K562 (cell line): ENCODE measurements at regions of chrX and their contacts with region 1.

Region 1: DNA sequence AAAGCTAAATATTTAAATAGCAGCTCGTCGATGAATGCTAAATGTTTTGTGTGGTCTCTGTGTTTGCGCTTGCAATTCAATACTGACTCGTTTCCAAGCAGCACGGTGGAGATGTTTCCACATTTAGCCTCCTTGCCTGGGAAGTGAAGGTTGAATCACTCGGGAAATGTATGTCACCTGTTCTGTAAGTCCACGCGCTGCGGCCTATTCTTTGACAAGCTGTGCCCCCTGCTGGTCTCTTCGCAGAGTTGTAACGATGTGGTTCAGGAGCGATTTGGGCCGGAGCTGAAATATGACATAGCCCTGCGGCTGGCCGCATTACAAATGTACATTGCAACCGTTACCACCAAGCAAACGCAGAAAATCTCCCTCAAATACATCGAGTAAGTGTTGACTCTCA is 89.6 kb upstream of the PRPS2 start:
- DNase-seq: peak; percentile 58 to 78 (median 63)
- ATAC-seq: peak; percentile 100
- H3K4me3 ChIP-seq: no peak overlapping the region
- H3K27ac ChIP-seq: no peak overlapping the region
- H3K4me1 ChIP-seq: no peaks in the 10 kb centered on the region
- H3K27me3 ChIP-seq: no peaks in the 10 kb centered on the region; a peak in 1 of 5 replicates
- CTCF ChIP-seq: peak; percentile 71 to 76 (median 76)
- EP300 ChIP-seq: no peak
- POLR2A ChIP-seq: no peak
- RAD21 ChIP-seq: peak; percentile 61 to 78

Region 2: GRCh38 chrX:11787564-11787963 is 914.1 kb before region 1 on chrX:
- CTCF ChIA-PET with region 1: interaction called, 4 read pairs
- POLR2A ChIA-PET with region 1: no interaction called
- in situ Hi-C with region 1: no loop called
- intact Hi-C with region 1: loop called (anchors 5 kb)
- DNase-seq: peak; percentile 34 to 67 (median 42)
- ATAC-seq: peak; percentile 91
- H3K4me3 ChIP-seq: no peak overlapping the region
- H3K27ac ChIP-seq: no peak overlapping the region
- H3K4me1 ChIP-seq: peaks cover 0 to 4% of the 10 kb centered on the region in 2 experiments; a peak in 1 of 5 replicates
- H3K27me3 ChIP-seq: no peaks in the 10 kb centered on the region
- CTCF ChIP-seq: peak; percentile 61 to 67 (median 62)
- EP300 ChIP-seq: no peak
- POLR2A ChIP-seq: no peak
- RAD21 ChIP-seq: peak; percentile 11 to 41; a peak in 1 of 4 replicates

Region 3: GRCh38 chrX:12080265-12080664 is 621.4 kb before region 1 on chrX:
- CTCF ChIA-PET with region 1: interaction called, 3 read pairs
- POLR2A ChIA-PET with region 1: no interaction called
- in situ Hi-C with region 1: no loop called
- intact Hi-C with region 1: loop called (anchors 1 kb)
- DNase-seq: peak; percentile 8 to 24 (median 10)
- ATAC-seq: no peak
- H3K4me3 ChIP-seq: no peak overlapping the region
- H3K27ac ChIP-seq: no peak overlapping the region
- H3K4me1 ChIP-seq: no peaks in the 10 kb centered on the region
- H3K27me3 ChIP-seq: no peaks in the 10 kb centered on the region
- CTCF ChIP-seq: peak; percentile 18 to 44 (median 23); a peak in 3 of 6 replicates
- EP300 ChIP-seq: no peak
- POLR2A ChIP-seq: no peak
- RAD21 ChIP-seq: peak; percentile 21 to 50; a peak in 2 of 4 replicates

Region 4: DNA sequence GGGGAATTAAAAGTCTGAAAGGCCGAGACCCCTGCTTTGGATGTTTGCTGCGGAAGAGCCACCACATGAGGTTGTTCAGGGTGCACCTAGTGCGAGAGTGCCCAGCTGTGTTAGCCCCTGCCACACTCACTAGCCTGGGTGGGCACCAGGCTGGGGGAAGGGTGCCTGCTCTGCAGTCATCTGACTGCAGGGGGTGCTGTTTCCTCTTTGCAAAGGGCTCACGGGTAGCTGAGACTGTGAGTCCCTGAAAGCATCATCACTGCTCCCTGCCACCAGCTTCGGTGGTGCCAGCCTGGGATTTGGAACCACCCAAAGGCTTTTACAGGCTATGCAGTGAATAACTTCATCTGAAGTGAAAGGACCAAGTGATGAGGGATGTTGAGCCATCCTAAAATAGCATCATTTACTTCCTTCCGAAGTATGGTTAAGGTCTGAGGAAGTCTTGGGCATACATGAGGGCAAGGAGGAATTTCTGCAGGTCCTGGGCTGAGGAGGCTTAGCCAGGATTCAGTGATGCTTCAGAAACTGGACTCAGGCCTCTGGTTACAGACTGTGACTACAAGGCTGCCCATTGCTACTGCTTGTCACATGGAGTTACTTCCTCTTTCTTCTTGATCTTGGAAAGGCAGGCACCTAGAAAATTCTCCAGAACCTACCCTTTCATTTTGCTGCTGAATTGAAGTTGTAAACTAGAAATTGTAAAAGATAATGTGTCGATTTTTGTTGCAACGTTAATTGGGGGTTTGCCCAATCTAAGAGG is 203.6 kb before region 1 on chrX:
- CTCF ChIA-PET with region 1: interaction called, 3 read pairs
- POLR2A ChIA-PET with region 1: no interaction called
- in situ Hi-C with region 1: no loop called
- intact Hi-C with region 1: loop called (anchors 2 kb)
- DNase-seq: peak; percentile 8 to 21 (median 14)
- ATAC-seq: peak; percentile 64; the same call in 2 of the 3 replicates
- H3K4me3 ChIP-seq: no peak overlapping the region
- H3K27ac ChIP-seq: no peak overlapping the region
- H3K4me1 ChIP-seq: no peaks in the 10 kb centered on the region
- H3K27me3 ChIP-seq: no peaks in the 10 kb centered on the region
- CTCF ChIP-seq: peak; percentile 32 to 54 (median 38)
- EP300 ChIP-seq: no peak
- POLR2A ChIP-seq: no peak
- RAD21 ChIP-seq: peak in 1 of 2 experiments; percentile 35; a peak in 2 of 4 replicates

Region 5: DNA sequence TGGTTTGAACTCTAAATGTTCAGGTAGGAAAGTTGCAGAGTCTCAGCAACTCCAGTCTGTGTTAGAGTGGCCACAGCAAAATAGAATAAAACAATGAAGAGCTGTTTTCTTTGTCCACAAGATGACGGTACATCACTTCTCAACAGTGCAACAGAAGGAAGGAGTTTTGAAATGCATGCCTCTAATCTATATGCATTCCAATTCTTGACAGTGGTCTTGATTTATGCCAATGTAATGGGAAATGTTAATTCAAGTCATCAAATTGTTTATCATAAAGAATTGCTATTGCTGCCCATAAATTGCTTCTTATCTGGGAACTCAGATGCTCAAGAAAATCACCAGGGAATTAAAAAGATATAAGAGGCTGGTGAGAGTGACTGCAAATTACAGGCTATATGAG is 105.9 kb before region 1 on chrX:
- CTCF ChIA-PET with region 1: no interaction called
- POLR2A ChIA-PET with region 1: no interaction called
- in situ Hi-C with region 1: no loop called
- intact Hi-C with region 1: loop called (anchors 10 kb)
- DNase-seq: no peak
- ATAC-seq: no peak
- H3K4me3 ChIP-seq: no peak overlapping the region
- H3K27ac ChIP-seq: no peak overlapping the region
- H3K4me1 ChIP-seq: no peaks in the 10 kb centered on the region
- H3K27me3 ChIP-seq: no peaks in the 10 kb centered on the region
- CTCF ChIP-seq: no peak
- EP300 ChIP-seq: no peak
- POLR2A ChIP-seq: no peak
- RAD21 ChIP-seq: 0 out of 4 replicates have a peak, but pooled peaks of 1 of the 2 experiments have one; percentile 10

Region 6: GRCh38 chrX:12771445-12772069 is 69.9 kb after region 1 on chrX:
- CTCF ChIA-PET with region 1: no interaction called
- POLR2A ChIA-PET with region 1: no interaction called
- in situ Hi-C with region 1: no loop called
- intact Hi-C with region 1: loop called (anchors 2 kb)
- DNase-seq: peak; percentile 65 to 84 (median 71)
- ATAC-seq: peak; percentile 100
- H3K4me3 ChIP-seq: no peak overlapping the region
- H3K27ac ChIP-seq: no peak overlapping the region
- H3K4me1 ChIP-seq: no peaks in the 10 kb centered on the region
- H3K27me3 ChIP-seq: peaks cover 16 to 22% of the 10 kb centered on the region in 2 experiments
- CTCF ChIP-seq: peak; percentile 95 to 100 (median 100)
- EP300 ChIP-seq: no peak
- POLR2A ChIP-seq: no peak
- RAD21 ChIP-seq: peak; percentile 38 to 63

Region 7: GRCh38 chrX:12804655-12805054 is 103.0 kb after region 1 on chrX:
- CTCF ChIA-PET with region 1: no interaction called
- POLR2A ChIA-PET with region 1: no interaction called
- in situ Hi-C with region 1: no loop called
- intact Hi-C with region 1: no loop called
- DNase-seq: no peak
- ATAC-seq: no peak
- H3K4me3 ChIP-seq: no peak overlapping the region
- H3K27ac ChIP-seq: no peak overlapping the region
- H3K4me1 ChIP-seq: no peaks in the 10 kb centered on the region
- H3K27me3 ChIP-seq: no peaks in the 10 kb centered on the region
- CTCF ChIP-seq: no peak
- EP300 ChIP-seq: no peak
- POLR2A ChIP-seq: no peak
- RAD21 ChIP-seq: no peak

Region 8: DNA sequence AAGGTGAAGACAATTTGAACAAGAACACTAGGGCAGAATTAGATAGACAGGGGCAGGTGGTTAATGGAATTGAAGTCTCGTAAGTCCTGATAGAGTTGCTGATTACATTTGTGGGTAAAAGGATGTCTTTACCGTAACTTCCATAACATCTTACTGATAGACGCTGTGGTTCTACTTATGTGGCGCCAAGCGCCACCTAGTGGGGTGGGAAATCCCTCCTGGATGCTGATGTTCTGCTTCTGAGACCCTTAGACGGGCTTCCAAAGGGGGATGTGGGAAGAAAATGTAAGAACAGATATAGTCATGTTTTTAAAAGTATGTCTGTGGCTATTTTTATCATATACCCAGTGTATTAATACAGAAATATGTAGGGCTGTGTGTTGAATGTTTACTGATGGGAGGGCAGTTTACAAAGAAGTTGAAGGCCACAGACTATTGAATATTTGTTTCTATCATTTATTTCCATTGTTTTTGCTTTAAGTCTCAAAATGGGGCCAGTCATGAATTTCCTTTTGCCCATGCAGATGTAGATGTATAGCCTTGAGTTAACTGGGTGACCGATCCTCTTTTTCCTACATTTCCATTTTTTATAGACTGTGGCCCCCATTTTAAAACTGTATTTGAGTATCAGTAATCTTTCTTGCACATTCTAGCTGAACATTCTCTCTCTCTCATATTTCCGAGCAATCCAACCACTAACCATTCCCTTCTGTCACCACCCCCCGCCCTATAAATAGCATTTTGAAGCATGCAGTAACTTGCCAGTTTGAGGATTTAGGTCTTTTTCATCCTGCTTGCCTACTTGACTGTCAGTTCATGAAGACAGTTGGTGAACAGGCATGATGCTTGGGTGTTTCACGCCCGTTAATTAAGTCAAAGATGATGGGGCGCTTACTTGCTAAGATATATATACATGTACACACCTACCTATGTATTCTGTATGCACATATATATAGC is 192.7 kb after region 1 on chrX:
- CTCF ChIA-PET with region 1: no interaction called
- POLR2A ChIA-PET with region 1: no interaction called
- in situ Hi-C with region 1: no loop called
- intact Hi-C with region 1: loop called (anchors 2 kb)
- DNase-seq: peak; percentile 25 to 57 (median 32)
- ATAC-seq: peak; percentile 80
- H3K4me3 ChIP-seq: no peak overlapping the region
- H3K27ac ChIP-seq: no peak overlapping the region
- H3K4me1 ChIP-seq: no peaks in the 10 kb centered on the region
- H3K27me3 ChIP-seq: peaks cover 0 to 9% of the 10 kb centered on the region in 2 experiments; a peak in 1 of 5 replicates
- CTCF ChIP-seq: peak; percentile 61 to 74 (median 63)
- EP300 ChIP-seq: no peak
- POLR2A ChIP-seq: no peak
- RAD21 ChIP-seq: peak; percentile 29 to 57; a peak in 3 of 4 replicates